HEK293 (cell line): ENCODE measurements at regions of chr11 and their contacts with region 1.

Region 1: GRCh38 chr11:117876341-117877119 is at the start of gene FXYD6:
- H3K4me3 ChIP-seq: peak within 1 kb of the TSS; percentile 59
- H3K27ac ChIP-seq: no peak within 1 kb of the TSS; the same call in 1 of the 2 replicates
- H3K4me1 ChIP-seq: no peaks in the 10 kb centered on the region
- CTCF ChIP-seq: no peak

Region 2: GRCh38 chr11:117678658-117679406 is 197.7 kb before region 1 on chr11:
- CTCF ChIA-PET with region 1: no interaction called
- POLR2A ChIA-PET with region 1: no interaction called
- H3K4me3 ChIP-seq: no peak overlapping the region
- H3K27ac ChIP-seq: no peak overlapping the region
- H3K4me1 ChIP-seq: no peaks in the 10 kb centered on the region
- CTCF ChIP-seq: no peak

Region 3: GRCh38 chr11:117861151-117862018 is 15.1 kb before region 1 on chr11:
- CTCF ChIA-PET with region 1: no interaction called
- POLR2A ChIA-PET with region 1: interaction called, 12 read pairs
- H3K4me3 ChIP-seq: no peak overlapping the region
- H3K27ac ChIP-seq: no peak overlapping the region; the same call in 1 of the 2 replicates
- H3K4me1 ChIP-seq: peaks cover 4% of the 10 kb centered on the region
- CTCF ChIP-seq: no peak